A673 (cell line): ENCODE measurements at regions of chr2 and their contacts with region 1.

Region 1: GRCh38 chr2:133326652-133327397 is 241.4 kb downstream of the NCKAP5 start:
- DNase-seq: peak; percentile 63
- H3K4me3 ChIP-seq: no peak overlapping the region
- H3K27ac ChIP-seq: peak overlapping the region; percentile 43
- H3K4me1 ChIP-seq: peaks cover 10% of the 10 kb centered on the region
- H3K27me3 ChIP-seq: no peaks in the 10 kb centered on the region
- CTCF ChIP-seq: no peak

Region 2: GRCh38 chr2:133086176-133086575 is 240.6 kb before region 1 on chr2:
- CTCF ChIA-PET with region 1: no interaction called
- POLR2A ChIA-PET with region 1: no interaction called
- intact Hi-C with region 1: no loop called
- DNase-seq: peak; percentile 3
- H3K4me3 ChIP-seq: no peak overlapping the region
- H3K27ac ChIP-seq: no peak overlapping the region
- H3K4me1 ChIP-seq: no peaks in the 10 kb centered on the region
- H3K27me3 ChIP-seq: no peaks in the 10 kb centered on the region
- CTCF ChIP-seq: no peak

Region 3: DNA sequence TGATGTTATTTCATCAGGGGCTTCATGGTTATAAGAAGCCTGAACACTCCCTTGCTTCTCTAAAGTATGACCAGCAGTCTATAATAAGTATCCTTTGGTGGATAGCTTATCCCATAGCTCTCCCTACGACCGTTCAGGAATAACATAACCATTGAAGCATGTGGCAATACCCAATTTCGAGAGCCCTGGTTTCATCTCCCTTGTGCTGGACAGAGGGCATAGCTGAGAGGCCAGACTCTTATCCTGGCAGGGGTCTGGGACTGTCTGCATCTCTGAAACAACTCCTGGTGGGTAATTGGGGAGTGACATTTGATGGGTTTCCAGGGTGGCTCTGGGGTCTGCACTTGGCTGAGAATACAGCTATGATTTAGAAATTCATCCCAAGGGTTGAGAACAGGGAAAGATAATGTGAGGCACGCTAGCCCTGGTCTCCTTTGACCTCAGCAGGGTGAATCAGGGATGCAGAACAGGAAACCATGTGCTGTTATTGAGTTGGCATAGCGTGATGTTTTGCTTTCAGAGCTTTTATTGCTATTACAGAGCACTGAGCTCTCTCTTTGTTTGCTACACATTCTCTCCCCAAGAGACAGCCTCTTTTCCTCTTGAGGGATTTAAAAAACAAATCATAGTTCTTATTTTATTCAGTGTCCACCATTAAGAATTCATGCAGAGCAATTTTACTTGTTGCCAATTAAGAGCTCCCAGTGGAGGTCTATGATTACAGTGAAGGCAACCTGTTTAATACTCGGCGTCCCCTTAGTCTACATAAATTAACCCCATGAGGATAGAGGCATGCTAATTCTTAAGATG is 33.1 kb before region 1 on chr2:
- CTCF ChIA-PET with region 1: interaction called, 10 read pairs
- POLR2A ChIA-PET with region 1: no interaction called
- intact Hi-C with region 1: no loop called
- DNase-seq: peak; percentile 91
- H3K4me3 ChIP-seq: no peak overlapping the region
- H3K27ac ChIP-seq: peak overlapping the region; percentile 23
- H3K4me1 ChIP-seq: peaks cover 50% of the 10 kb centered on the region
- H3K27me3 ChIP-seq: no peaks in the 10 kb centered on the region
- CTCF ChIP-seq: no peak